ENCODE measurements at regions of chr6 and their contacts with region 1.

Region 1: DNA sequence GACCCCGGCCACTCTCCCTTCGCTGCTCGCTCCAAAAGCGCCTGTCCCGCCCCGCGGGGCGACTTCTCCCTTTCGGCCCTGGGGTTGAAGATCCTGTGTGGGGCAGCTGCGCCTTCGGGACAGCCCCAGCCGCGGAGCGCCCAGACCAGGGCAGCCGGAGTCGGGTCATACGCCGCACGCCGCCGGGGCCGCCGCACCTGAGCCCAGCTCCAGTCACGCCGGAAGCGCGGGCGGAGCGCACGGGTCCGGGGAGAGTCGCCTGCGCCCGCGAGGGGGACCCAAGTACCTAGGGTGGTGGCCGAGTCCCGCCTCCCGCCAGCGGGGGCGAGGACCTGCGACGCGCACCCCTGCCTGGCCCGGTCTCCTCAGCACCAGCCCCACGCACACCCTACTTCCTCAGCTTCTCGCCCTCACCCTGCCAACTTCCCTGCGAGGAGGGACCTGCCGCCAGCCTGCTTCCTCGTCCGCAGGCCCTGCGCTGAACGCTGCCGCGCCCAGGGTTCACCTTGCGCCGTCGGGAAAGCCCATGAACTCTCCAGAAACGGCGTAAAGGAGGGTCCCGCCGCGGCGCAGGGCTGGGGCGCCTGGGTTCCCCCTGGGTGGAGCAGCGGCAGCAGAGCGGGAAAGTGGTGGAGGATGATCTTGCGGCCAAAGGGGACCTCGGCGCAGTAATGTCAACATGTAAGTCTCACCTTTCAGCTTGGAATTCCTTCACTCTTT is at the start of gene ADGRG6:
- DNase-seq: no peak
- ATAC-seq: peak; percentile 89
- H3K4me3 ChIP-seq: peak within 1 kb of the TSS; percentile 78 to 85
- H3K27ac ChIP-seq: peak within 1 kb of the TSS; percentile 100
- H3K4me1 ChIP-seq: peaks cover 36% of the 10 kb centered on the region
- H3K27me3 ChIP-seq: no peaks in the 10 kb centered on the region
- CTCF ChIP-seq: peak; percentile 75
- total RNA-seq, gene ADGRG6: 259 TPM

Region 2: GRCh38 chr6:142331075-142331551 is 29.3 kb after region 1 on chr6:
- CTCF ChIA-PET with region 1: no interaction called
- POLR2A ChIA-PET with region 1: no interaction called
- in situ Hi-C with region 1: no loop called
- intact Hi-C with region 1: no loop called
- DNase-seq: no peak
- ATAC-seq: no peak
- H3K4me3 ChIP-seq: peak overlapping the region in 1 of 2 experiments; percentile 32; a peak in 2 of 4 replicates
- H3K27ac ChIP-seq: peak overlapping the region; percentile 99
- H3K4me1 ChIP-seq: peaks cover 100% of the 10 kb centered on the region
- H3K27me3 ChIP-seq: no peaks in the 10 kb centered on the region
- CTCF ChIP-seq: no peak

Region 3: DNA sequence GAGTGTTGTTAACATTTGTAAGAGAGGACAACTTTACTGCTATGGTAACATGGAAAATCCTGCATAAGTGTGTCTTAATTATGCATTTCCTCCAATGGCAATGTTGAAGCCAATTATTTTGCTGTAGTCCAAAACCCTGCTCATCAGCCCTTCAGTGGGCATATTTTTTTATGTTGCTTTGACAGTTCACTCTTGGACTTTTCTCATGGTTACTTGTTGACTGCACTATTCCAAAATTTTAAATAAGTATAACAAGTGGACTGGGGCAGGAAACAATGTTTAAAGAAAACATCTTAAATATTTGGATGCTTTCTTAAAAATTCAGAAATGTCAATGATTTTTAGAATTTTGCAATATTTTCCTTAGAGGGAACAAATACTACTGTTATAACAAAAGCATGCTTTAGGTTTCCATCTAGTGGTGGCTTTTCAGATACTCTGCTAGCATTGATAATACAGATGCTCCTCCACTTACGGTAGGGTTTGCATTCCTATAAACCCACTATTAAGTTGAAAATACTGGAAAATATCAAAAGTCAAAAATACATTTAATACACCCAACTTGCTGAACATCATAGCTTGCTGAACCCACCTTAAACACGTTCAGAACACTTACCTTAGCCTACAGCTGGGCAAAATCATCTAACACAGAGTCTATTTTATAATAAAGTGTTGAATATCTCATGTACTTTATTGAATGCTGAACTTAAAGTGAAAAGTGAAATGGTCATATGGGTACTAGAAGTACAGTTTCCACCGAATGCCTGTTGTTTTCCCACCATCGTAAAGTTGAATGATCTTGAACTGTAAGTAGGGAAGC is 86.4 kb after region 1 on chr6:
- CTCF ChIA-PET with region 1: interaction called, 5 read pairs
- POLR2A ChIA-PET with region 1: interaction called, 9 read pairs
- in situ Hi-C with region 1: no loop called
- intact Hi-C with region 1: loop called (anchors 2 kb)
- DNase-seq: no peak
- ATAC-seq: peak; percentile 85
- H3K4me3 ChIP-seq: no peak overlapping the region
- H3K27ac ChIP-seq: peak overlapping the region; percentile 100
- H3K4me1 ChIP-seq: peaks cover 62% of the 10 kb centered on the region
- H3K27me3 ChIP-seq: no peaks in the 10 kb centered on the region
- CTCF ChIP-seq: peak; percentile 74; the same call in 1 of the 2 replicates

Measured in Panc1 (cell line).